Right cardiac atrium (tissue), 5 donors: ENCODE measurements at regions of chr3 and their contacts with region 1.

Region 1: DNA sequence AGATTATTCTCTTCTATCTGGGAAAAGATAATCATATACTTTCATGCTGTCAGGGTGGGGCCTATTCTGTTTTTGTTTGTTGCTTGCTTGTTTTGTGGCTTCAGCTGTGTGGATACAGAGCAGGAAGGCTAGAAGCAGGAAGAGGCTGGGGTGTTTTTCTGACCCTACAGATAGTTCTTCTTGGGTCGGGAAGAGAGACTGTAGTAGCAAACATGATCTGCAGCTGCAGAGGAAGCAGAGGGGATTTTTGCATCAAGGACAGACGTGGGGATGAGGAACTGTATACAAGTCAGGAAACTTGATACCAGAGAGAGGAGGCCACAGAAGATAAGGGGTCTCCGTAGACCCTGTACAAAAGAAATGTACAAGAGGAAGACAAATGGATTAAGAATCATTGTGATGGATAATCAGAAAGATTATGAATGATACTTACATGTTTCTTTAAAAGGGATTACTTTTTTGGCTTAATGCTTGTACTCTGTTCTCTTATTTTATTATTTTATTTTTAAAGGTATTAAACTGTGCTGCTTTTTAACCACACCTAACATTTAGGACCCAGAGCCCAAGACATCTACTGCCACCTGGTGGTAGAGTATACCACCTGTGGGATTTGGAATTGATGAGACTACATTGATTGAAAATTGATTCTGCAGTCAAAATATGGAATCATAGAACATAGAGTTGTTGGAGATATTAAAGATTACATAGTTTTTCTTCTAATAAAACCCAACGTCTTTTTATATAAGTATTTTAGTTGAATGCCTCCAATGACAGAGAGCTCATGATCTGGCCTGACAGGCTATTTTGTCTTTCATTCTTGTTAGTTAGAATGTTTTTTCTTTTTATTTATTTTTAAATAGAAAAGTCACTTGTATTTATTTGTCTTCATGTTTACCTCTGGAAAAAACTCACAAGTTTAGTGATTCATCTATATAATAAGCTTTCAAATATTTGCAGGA is 87.3 kb upstream of the ROPN1 start:
- DNase-seq: no peak
- ATAC-seq: peak in 1 of 2 donors; percentile 38
- H3K4me3 ChIP-seq: no peak overlapping the region
- H3K27ac ChIP-seq: no peak overlapping the region
- H3K4me1 ChIP-seq: peaks cover 5% of the 10 kb centered on the region
- H3K27me3 ChIP-seq: no peaks in the 10 kb centered on the region

Region 2: DNA sequence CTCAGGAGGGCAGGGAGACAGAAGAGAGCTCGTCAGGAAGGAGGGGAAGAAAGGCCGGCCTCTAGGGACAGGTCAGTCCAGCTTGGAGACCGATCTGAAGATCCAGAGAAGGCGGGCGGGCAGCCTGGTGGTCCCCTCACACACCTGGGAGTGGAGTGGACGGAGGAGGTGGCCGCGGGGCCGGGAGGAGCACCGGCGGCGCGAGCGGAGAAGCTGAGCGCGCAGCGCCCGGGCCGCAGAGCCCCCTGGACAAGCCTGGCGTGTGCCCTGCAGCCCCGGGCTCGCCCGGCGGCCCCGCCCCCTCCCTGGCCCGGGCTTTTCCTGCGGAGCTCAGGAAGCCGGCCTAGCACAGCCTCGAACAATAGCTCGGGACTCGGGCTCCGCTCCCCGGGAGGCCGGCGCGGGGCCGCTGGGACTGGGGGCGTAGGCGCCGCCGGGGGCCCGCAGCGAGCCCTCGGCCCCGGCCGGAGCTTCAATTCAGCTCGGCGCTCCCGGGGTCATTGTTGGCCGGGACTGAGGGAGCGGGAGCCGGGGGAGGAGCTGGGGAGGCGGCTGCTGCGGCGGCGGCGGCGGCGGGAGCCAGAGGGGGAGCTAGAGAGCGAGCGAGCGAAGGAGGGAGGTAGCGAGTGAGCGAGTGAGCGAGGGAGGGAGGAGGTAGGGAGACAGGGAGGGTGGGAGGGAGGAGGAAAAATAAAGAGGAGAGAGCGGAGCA is 46.4 kb before region 1 on chr3:
- intact Hi-C with region 1: loop called in 1 of 4 experiments (anchors 5 kb)
- DNase-seq: peak; percentile 85 to 96 (median 93)
- ATAC-seq: peak; percentile 95 to 96
- H3K4me3 ChIP-seq: peak overlapping the region; percentile 88
- H3K27ac ChIP-seq: peak overlapping the region; percentile 78
- H3K4me1 ChIP-seq: no peaks in the 10 kb centered on the region
- H3K27me3 ChIP-seq: no peaks in the 10 kb centered on the region

Region 3: DNA sequence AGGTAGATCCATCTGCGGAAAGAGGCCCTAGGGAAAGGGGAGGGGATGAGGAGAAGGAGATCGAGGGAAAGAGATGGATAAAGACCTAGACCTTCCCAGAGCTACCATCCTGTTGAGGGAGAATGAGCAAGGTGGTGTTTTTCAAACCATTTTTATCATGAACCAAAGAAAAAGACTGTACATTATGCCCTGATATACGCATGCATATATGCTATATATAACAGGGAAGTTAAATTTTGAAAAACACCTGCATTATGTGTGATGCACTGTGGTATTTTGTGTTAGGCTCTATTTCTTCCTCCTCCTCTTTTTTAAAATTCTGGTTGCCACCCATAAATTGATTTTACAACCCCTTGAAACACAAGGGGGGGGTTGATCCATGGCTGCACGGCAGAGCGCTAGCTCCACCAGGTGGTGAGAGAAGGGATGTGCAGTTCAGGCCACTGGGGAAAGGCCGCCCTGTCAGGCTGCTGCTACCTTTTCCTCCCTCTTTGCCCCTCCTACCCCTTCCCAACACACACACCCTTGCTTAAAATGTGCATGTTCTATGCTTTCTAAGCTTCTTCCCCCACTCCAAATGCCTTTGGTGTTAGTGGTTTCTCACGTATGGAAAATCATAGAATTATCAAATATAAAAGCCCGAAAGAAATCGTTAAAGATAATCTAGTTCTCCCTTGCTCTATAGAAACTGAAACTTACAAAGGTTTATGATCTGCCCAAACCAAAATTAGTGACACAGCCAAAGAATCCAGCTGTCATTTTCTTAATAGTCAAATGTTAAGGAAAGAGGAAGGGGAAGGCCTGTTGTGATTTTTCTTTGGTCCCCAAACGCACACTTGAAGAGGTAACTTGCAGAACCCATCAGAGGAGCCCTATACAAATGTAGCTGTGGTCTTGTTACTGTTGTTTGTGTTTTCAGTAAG is 389.0 kb after region 1 on chr3:
- intact Hi-C with region 1: loop called in 1 of 4 experiments (anchors 10 kb)
- DNase-seq: peak; percentile 27 to 63 (median 60)
- ATAC-seq: peak; percentile 69 to 83
- H3K4me3 ChIP-seq: no peak overlapping the region
- H3K27ac ChIP-seq: no peak overlapping the region
- H3K4me1 ChIP-seq: no peaks in the 10 kb centered on the region
- H3K27me3 ChIP-seq: no peaks in the 10 kb centered on the region